GM10248 (cell line): ENCODE measurements at regions of chr13 and their contacts with region 1.

Region 1: GRCh38 chr13:49278211-49278610 is 30.5 kb downstream of the CDADC1 start:
- DNase-seq: no peak
- CTCF ChIP-seq: no peak

Region 2: DNA sequence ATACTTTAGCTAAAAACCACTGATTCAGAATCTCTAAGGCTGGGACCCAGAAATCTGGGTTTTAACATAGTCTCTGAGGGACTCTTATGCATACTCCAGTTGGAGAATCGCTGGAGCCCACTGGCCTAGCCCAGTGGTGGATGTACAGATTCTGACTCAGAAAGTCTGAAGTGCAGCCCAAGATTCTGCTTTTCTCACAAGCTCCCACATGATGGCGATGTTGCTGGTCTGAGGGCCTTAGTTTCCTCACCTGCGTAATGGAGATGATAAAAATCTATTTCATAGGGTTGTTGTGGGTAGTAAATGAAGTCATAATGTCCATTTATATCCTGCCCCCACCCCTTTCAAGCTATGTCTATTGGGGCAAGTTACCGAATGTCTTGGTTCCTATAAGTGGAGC is 38.2 kb before region 1 on chr13:
- CTCF ChIA-PET with region 1: interaction called, 44 read pairs
- POLR2A ChIA-PET with region 1: no interaction called
- DNase-seq: no peak
- CTCF ChIP-seq: peak; percentile 61

Region 3: DNA sequence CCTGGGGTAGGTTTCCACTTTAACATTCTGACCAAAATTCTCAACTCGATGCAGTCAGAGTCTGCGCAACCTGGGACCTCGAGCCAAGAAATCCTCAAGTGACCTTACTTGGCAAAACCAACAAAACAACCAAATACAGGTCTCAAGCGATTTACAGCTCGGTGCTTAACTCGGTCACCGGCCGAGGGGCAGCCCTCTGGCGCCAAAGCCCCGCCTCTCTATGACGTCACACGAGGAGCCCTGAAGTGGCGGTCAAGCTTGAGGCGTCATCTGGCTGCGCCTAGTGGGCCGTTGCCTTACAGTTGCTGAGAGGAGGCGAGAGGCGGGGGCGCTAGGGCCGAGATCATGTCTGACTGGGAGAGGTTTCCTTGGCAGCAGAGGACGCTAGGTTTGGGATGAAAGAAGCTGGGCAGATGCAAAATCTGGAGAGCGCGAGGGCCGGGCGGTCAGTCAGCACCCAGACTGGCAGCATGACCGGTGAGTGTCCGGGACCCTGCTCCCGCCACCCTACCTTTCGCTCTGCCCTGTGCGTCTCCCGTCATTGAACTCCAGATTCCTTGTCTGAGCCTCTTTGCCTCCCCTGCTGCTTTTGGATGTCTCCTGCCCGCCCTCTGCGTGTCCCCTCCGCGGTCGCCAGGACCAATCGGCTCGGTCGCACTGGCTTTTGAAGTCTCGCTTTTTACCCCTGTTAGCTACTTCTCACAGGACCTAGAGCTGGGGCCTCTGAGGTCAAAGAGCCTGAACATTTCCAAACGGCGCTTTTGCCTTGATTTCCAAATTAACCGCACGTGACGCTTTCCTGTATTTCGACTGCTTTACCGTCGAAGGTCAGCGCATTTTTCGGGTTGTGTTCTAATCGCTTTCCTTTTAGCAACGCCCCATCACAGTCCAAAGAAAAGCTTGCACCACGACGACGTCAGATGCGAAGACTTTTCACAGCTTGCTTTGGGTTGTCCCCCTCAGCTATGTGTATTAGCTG is 30.3 kb before region 1 on chr13 and contains the start of gene CDADC1:
- CTCF ChIA-PET with region 1: interaction called, 17 read pairs
- POLR2A ChIA-PET with region 1: no interaction called
- DNase-seq: peak; percentile 95
- CTCF ChIP-seq: no peak

Region 4: DNA sequence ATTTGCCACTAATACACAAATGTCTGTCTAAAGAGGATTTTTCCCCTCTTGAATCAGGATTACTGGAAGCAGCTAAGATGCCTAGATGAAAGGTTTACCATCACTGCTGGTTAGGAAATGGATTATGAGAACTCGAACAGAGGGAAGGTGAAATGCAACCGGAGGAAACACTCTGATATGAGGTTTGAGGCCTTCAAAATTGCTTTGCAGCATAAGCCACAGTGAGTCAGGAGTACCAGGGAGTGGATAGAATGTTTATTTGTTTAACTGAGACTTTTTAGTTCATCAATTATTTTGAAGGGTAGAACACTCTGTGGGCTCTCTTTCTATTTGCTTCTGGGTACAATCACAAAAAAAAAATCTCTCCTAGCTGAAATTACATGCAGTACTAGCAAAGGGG is 12.4 kb before region 1 on chr13:
- CTCF ChIA-PET with region 1: interaction called, 43 read pairs
- POLR2A ChIA-PET with region 1: no interaction called
- DNase-seq: no peak
- CTCF ChIP-seq: no peak

Region 5: DNA sequence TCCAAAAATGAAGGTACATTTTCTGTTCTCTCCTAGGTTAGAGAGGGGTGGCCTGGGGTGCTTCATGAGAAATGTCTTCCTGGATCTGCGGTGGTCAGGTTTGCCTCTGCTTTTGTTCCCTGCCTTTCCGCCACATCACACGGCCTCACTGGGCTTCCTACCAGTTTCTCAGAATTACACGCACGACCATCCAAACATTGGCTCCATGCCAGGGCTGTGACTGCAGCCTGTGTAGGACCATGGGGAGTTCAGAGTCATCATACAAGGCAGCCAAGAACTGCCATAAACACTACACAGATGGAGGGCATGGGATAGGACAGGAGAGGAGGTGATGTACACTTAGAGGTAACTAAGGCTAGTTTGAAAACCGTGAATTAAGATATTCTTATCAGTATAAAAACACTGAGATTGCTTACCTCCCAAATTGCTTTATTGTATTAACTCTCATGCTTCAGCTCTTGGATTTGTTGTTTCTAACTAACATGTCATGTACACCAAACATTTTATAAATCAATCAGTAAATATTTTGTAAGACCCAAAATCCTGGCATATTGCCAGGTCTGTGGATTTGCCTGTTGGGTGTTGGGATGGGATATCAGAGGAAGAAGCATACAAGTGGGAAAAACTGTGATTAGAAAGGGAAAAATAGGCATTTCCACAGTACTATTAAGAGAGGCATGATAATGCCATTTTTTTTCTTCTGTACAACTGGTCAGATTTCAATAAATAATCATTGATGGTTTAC is 14.7 kb after region 1 on chr13:
- CTCF ChIA-PET with region 1: interaction called, 16 read pairs
- POLR2A ChIA-PET with region 1: no interaction called
- DNase-seq: no peak
- CTCF ChIP-seq: no peak

Region 6: GRCh38 chr13:49606747-49607648 is 328.8 kb after region 1 on chr13:
- CTCF ChIA-PET with region 1: interaction called, 15 read pairs
- POLR2A ChIA-PET with region 1: no interaction called
- DNase-seq: peak; percentile 77
- CTCF ChIP-seq: peak; percentile 84